ENCODE measurements at regions of chr9 and their contacts with region 1.

Region 1: DNA sequence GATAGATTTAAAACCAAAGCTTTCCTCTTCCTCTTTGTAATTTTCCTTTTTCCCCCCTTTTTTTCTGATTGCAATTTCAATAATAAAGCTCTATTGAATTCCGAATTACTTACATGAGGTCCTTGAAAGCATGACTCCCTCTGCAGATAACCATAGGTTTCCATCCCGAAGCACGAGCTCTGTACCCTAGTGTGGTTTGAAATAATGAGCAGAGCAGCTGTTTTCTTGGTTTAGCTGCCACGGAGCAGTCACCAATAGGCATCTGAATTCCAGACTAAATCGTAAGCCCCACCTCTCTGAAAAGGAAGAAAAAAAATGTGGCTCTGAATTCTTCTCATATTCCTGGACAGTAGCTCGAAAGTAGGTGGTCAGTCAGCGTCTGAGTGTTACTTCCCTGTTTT is 18.5 kb upstream of the GNE start:
- DNase-seq: peak; percentile 90
- ATAC-seq: peak; percentile 100
- H3K4me3 ChIP-seq: peak overlapping the region; percentile 8; the same call in 1 of the 2 replicates
- H3K27ac ChIP-seq: peak overlapping the region; percentile 4; the same call in 1 of the 2 replicates
- H3K4me1 ChIP-seq: no peaks in the 10 kb centered on the region; the same call in 1 of the 2 replicates
- H3K27me3 ChIP-seq: no peaks in the 10 kb centered on the region
- CTCF ChIP-seq: no peak
- POLR2A ChIP-seq: no peak
- RAD21 ChIP-seq: no peak

Region 2: GRCh38 chr9:36247356-36247755 is 29.4 kb before region 1 on chr9:
- CTCF ChIA-PET with region 1: no interaction called
- POLR2A ChIA-PET with region 1: no interaction called
- dilution Hi-C with region 1: no loop called
- in situ Hi-C with region 1: no loop called
- intact Hi-C with region 1: no loop called
- DNase-seq: no peak
- ATAC-seq: no peak
- H3K4me3 ChIP-seq: no peak overlapping the region
- H3K27ac ChIP-seq: no peak overlapping the region
- H3K4me1 ChIP-seq: no peaks in the 10 kb centered on the region
- H3K27me3 ChIP-seq: no peaks in the 10 kb centered on the region
- CTCF ChIP-seq: no peak
- POLR2A ChIP-seq: no peak
- RAD21 ChIP-seq: no peak

Region 3: GRCh38 chr9:36258208-36258988 is 18.4 kb before region 1 on chr9 and contains the start of gene GNE:
- CTCF ChIA-PET with region 1: interaction called, 3 read pairs
- POLR2A ChIA-PET with region 1: no interaction called
- dilution Hi-C with region 1: no loop called
- in situ Hi-C with region 1: no loop called
- intact Hi-C with region 1: loop called (anchors 1 kb)
- DNase-seq: peak; percentile 94
- ATAC-seq: peak; percentile 97
- H3K4me3 ChIP-seq: peak within 1 kb of the TSS; percentile 77
- H3K27ac ChIP-seq: peak within 1 kb of the TSS; percentile 79
- H3K4me1 ChIP-seq: 0 out of 2 replicates have a peak, but pooled peaks cover 2% of the 10 kb centered on the region
- H3K27me3 ChIP-seq: no peaks in the 10 kb centered on the region
- CTCF ChIP-seq: no peak
- POLR2A ChIP-seq: peak; percentile 87
- RAD21 ChIP-seq: no peak
- total RNA-seq, gene GNE: 28.3 and 34.1 TPM in 2 replicates